ENCODE measurements at regions of chr5 and their contacts with region 1.

Region 1: GRCh38 chr5:154065971-154066370 is 27.2 kb downstream of the MFAP3 start:
- DNase-seq: no peak
- H3K4me3 ChIP-seq: no peak overlapping the region
- H3K27ac ChIP-seq: no peak overlapping the region
- H3K4me1 ChIP-seq: no peaks in the 10 kb centered on the region
- H3K27me3 ChIP-seq: no peaks in the 10 kb centered on the region
- CTCF ChIP-seq: no peak
- POLR2A ChIP-seq: no peak

Region 2: GRCh38 chr5:153865899-153866575 is 199.9 kb before region 1 on chr5:
- intact Hi-C with region 1: no loop called
- DNase-seq: no peak
- H3K4me3 ChIP-seq: no peak overlapping the region
- H3K27ac ChIP-seq: no peak overlapping the region
- H3K4me1 ChIP-seq: no peaks in the 10 kb centered on the region
- H3K27me3 ChIP-seq: no peaks in the 10 kb centered on the region
- CTCF ChIP-seq: no peak
- POLR2A ChIP-seq: no peak

Region 3: GRCh38 chr5:154118893-154119336 is 52.9 kb after region 1 on chr5:
- intact Hi-C with region 1: no loop called
- DNase-seq: no peak
- H3K4me3 ChIP-seq: no peak overlapping the region
- H3K27ac ChIP-seq: no peak overlapping the region
- H3K4me1 ChIP-seq: no peaks in the 10 kb centered on the region
- H3K27me3 ChIP-seq: no peaks in the 10 kb centered on the region
- CTCF ChIP-seq: no peak
- POLR2A ChIP-seq: no peak

Region 4: GRCh38 chr5:154298065-154298464 is 232.1 kb after region 1 on chr5:
- intact Hi-C with region 1: no loop called
- DNase-seq: no peak
- H3K4me3 ChIP-seq: no peak overlapping the region
- H3K27ac ChIP-seq: no peak overlapping the region
- H3K4me1 ChIP-seq: peaks cover 5 to 18% (median 6%) of the 10 kb centered on the region in 3 donors
- H3K27me3 ChIP-seq: no peaks in the 10 kb centered on the region
- CTCF ChIP-seq: no peak
- POLR2A ChIP-seq: no peak

Region 5: GRCh38 chr5:154405078-154405792 is 339.3 kb after region 1 on chr5:
- intact Hi-C with region 1: loop called (anchors 5 kb)
- DNase-seq: peak; percentile 14
- H3K4me3 ChIP-seq: peak overlapping the region in 3 of 4 donors; percentile 20 to 52 (median 31)
- H3K27ac ChIP-seq: no peak overlapping the region
- H3K4me1 ChIP-seq: peaks cover 6 to 11% (median 6%) of the 10 kb centered on the region in 3 donors
- H3K27me3 ChIP-seq: no peaks in the 10 kb centered on the region
- CTCF ChIP-seq: peak; percentile 68 to 88 (median 78)
- POLR2A ChIP-seq: no peak

Measured in esophagus squamous epithelium (tissue), 5 donors.